GM10248 (cell line): ENCODE measurements at regions of chr3 and their contacts with region 1.

Region 1: DNA sequence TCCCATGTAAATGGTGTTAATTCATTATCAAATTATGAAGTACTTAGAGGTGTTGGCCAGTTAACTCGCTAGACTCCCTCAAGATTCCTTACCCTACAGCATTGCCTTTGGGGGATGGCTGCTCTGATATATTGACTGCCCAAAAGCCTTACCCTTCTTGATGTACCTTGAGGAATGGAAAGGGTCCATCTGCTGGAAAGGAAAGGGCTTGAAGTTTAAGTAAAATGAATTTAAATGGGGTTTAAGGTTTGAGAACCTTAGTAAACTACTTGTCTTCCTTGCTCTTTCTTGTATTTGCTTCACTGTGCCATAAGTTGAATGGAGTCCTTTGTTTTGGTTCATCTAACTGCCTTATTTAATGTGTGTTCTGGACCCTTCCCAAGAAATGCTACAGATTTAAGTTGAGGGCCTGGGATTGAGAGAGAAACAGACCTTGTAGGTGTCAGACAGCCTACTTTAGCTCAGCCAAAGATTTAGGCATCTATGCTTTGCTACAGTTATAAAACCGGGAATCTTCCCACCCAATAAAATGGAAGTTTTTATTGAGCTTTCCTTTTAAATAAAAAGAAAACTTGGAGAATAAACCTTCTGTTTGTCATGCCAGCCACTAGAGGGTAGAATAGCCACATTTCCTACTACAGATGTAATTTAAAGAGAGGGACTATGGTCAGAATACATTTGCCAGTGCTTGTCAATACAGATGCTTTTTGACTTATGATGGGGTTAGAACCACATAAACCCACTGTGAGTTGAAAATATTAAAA is 25.3 kb downstream of the CMSS1 start:
- DNase-seq: peak; percentile 23
- CTCF ChIP-seq: peak; percentile 60

Region 2: DNA sequence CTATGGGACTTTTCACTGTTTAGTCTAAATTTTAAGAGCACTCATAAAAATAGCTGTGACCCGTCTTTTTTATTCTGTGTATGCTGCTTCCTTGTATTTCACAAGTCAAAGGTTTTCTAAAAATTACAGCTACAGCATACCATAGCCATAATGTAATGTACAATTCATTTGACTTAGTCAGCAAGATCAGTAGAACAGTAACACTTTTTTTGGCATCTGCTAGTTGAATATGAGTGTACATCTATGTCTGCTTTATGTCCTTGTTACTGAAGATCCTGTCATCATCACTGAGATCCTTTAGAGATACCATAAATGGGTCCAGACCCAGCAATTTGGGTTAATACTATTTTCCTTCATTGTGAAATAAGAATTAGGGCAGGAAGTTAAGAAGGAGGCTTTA is 16.8 kb after region 1 on chr3:
- CTCF ChIA-PET with region 1: interaction called, 12 read pairs
- POLR2A ChIA-PET with region 1: no interaction called
- DNase-seq: no peak
- CTCF ChIP-seq: no peak

Region 3: GRCh38 chr3:100260685-100261484 is 417.9 kb after region 1 on chr3 and contains the start of gene TBC1D23:
- CTCF ChIA-PET with region 1: interaction called, 39 read pairs
- POLR2A ChIA-PET with region 1: interaction called, 11 read pairs
- DNase-seq: peak; percentile 99
- CTCF ChIP-seq: no peak